SK-N-SH (cell line): ENCODE measurements at regions of chr11 and their contacts with region 1.

Region 1: GRCh38 chr11:14907411-14908213 is 15.6 kb upstream of the CYP2R1 start:
- DNase-seq: peak; percentile 71
- H3K4me3 ChIP-seq: peak overlapping the region in 1 of 2 experiments; percentile 28; a peak in 1 of 4 replicates
- H3K27ac ChIP-seq: no peak overlapping the region
- H3K4me1 ChIP-seq: peaks cover 0 to 3% of the 10 kb centered on the region in 2 experiments; a peak in 2 of 4 replicates
- H3K27me3 ChIP-seq: no peaks in the 10 kb centered on the region; the same call in 1 of the 2 replicates
- CTCF ChIP-seq: peak; percentile 77
- EP300 ChIP-seq: no peak
- RAD21 ChIP-seq: peak; percentile 68

Region 2: DNA sequence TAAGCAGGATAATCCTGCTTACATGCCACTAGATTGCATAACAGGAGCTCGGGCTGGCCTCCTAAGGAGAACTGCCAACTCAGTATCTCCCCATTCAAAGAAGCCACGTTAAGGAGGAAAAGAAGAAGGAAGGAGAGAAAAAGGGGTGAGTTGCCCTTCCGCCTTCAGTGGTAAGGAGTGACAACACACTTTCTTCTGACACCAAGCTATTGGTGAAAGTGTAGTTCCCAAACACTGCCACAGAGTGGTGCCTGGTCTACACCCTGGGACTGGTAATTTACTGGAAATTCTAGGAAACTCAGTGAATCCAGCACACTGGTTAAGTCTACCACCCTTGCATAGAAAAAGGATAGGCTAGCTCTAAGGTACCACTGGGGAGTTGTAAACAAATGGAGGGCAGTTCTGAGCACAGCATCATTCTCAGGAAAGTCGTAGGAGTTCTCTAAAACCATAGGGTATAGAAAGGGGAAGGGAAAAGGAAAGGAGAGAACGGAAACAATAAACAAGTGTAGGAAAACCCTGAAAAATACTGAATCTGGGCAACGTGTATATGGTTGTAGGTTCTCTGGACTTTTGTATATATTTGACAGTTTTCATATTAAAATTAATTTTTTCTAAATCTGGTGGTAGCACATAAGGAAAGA is 606.8 kb before region 1 on chr11:
- CTCF ChIA-PET with region 1: interaction called, 10 read pairs
- POLR2A ChIA-PET with region 1: no interaction called
- DNase-seq: peak; percentile 61
- H3K4me3 ChIP-seq: peak overlapping the region in 1 of 2 experiments; percentile 6; a peak in 2 of 4 replicates
- H3K27ac ChIP-seq: no peak overlapping the region
- H3K4me1 ChIP-seq: peaks cover 2 to 17% of the 10 kb centered on the region in 2 experiments; a peak in 1 of 4 replicates
- H3K27me3 ChIP-seq: no peaks in the 10 kb centered on the region
- CTCF ChIP-seq: peak; percentile 84
- EP300 ChIP-seq: no peak
- RAD21 ChIP-seq: peak; percentile 97

Region 3: GRCh38 chr11:14544611-14545010 is 363.0 kb before region 1 on chr11:
- CTCF ChIA-PET with region 1: interaction called, 26 read pairs
- POLR2A ChIA-PET with region 1: no interaction called
- DNase-seq: no peak
- H3K4me3 ChIP-seq: no peak overlapping the region
- H3K27ac ChIP-seq: no peak overlapping the region
- H3K4me1 ChIP-seq: peaks cover 0 to 5% of the 10 kb centered on the region in 2 experiments; a peak in 1 of 4 replicates
- H3K27me3 ChIP-seq: no peaks in the 10 kb centered on the region
- CTCF ChIP-seq: no peak
- EP300 ChIP-seq: no peak
- RAD21 ChIP-seq: no peak

Region 4: DNA sequence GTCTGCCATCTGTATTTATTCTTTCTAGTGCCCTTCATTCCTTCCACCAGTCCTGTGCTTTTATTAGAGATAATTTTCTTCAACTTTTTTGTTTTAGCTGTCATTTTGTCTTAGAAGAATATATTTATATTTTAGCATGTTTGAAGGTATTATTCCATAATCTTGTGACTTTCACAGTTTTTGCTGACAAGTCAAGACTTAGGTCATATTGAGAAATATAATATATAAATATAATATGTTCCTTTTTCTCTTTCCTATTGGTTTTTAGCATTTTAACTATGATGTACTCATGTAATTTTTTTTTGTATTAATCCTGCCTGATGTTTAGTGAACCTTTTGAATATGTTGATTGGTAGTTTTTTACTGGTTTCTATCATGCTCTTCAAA is 71.5 kb before region 1 on chr11:
- CTCF ChIA-PET with region 1: no interaction called
- POLR2A ChIA-PET with region 1: no interaction called
- DNase-seq: no peak
- H3K4me3 ChIP-seq: no peak overlapping the region
- H3K27ac ChIP-seq: no peak overlapping the region
- H3K4me1 ChIP-seq: no peaks in the 10 kb centered on the region
- H3K27me3 ChIP-seq: no peaks in the 10 kb centered on the region
- CTCF ChIP-seq: no peak
- EP300 ChIP-seq: no peak
- RAD21 ChIP-seq: no peak

Region 5: DNA sequence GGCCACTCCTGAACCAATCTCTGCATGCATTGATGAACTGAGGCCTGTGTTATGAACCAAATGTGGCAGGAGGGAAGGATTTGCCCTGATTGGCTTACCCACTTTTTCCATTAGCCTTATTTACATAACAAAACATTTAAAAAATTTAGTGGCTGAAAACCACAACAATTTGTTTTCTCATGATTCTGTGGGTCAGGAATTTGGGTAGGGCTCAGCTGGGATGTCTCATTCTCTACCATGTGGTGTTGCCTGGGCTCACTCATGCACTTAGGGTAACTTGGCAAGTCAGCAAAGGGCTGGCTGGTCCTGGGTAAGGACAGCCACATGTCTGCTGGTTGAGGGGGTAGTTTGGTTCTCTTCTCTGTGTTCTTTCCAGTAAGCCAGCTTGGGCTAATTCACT is 19.5 kb after region 1 on chr11:
- CTCF ChIA-PET with region 1: interaction called, 44 read pairs
- POLR2A ChIA-PET with region 1: no interaction called
- DNase-seq: no peak
- H3K4me3 ChIP-seq: no peak overlapping the region
- H3K27ac ChIP-seq: no peak overlapping the region
- H3K4me1 ChIP-seq: no peaks in the 10 kb centered on the region
- H3K27me3 ChIP-seq: no peaks in the 10 kb centered on the region
- CTCF ChIP-seq: no peak
- EP300 ChIP-seq: no peak
- RAD21 ChIP-seq: no peak

Region 6: GRCh38 chr11:15006139-15006759 is 98.6 kb after region 1 on chr11:
- CTCF ChIA-PET with region 1: interaction called, 14 read pairs
- POLR2A ChIA-PET with region 1: no interaction called
- DNase-seq: peak; percentile 3
- H3K4me3 ChIP-seq: no peak overlapping the region
- H3K27ac ChIP-seq: no peak overlapping the region
- H3K4me1 ChIP-seq: no peaks in the 10 kb centered on the region
- H3K27me3 ChIP-seq: no peaks in the 10 kb centered on the region
- CTCF ChIP-seq: peak; percentile 63
- EP300 ChIP-seq: no peak
- RAD21 ChIP-seq: peak; percentile 47

Region 7: DNA sequence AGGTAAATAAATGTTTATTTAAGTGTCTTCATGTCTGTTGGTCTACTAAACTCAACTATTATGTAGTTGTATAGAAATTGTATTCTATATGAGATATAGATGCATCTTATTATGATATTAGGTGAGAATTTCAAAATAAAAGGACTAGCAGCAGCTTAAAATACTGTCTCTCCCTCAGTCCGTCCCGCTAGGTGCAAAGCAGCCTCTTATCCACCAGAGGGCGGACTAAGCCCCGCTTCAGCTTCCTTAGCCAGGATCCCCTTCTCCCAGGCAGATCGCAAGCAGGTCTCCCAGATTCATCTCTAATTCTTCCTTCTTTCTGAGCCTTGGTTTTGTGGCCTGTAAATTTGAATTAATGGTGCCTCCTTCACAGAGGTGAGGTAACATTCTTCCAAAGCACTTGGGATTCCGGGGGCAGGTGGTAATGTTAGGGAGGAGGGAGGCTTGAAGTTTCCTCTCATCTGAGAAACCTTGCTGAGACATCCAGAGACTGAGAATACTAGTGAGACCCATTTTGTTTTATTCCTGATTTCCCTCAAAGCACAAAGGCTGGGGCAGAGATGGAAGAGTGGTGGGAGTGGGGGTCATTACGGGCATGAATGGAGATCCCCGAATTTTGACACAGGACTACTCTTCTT is 193.6 kb after region 1 on chr11:
- CTCF ChIA-PET with region 1: interaction called, 30 read pairs
- POLR2A ChIA-PET with region 1: no interaction called
- DNase-seq: peak; percentile 73
- H3K4me3 ChIP-seq: no peak overlapping the region
- H3K27ac ChIP-seq: no peak overlapping the region
- H3K4me1 ChIP-seq: no peaks in the 10 kb centered on the region; a peak in 1 of 4 replicates
- H3K27me3 ChIP-seq: no peaks in the 10 kb centered on the region
- CTCF ChIP-seq: peak; percentile 95
- EP300 ChIP-seq: no peak
- RAD21 ChIP-seq: peak; percentile 90